A673 (cell line): ENCODE measurements at regions of chr4 and their contacts with region 1.

Region 1: DNA sequence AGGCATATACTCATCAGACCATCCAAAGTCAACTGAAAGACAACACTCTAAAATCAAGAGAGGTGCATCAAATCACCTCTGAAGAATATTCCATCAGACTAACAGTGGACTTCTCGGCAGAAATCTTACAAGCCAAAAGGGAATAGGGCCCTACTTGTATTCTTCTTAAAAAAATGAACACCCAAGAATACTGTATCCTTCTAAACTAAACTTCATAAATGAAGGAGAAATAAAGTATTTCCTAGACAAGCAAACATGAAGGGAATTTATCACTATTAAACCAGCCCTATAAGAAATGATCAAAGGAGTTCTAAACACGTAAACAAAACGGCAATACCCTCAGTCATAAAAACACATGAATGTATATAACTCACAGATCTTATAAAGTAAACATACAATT is 141.2 kb downstream of the CXXC4 start:
- DNase-seq: no peak
- H3K4me3 ChIP-seq: no peak overlapping the region
- H3K27ac ChIP-seq: no peak overlapping the region
- H3K4me1 ChIP-seq: no peaks in the 10 kb centered on the region
- H3K27me3 ChIP-seq: no peaks in the 10 kb centered on the region
- CTCF ChIP-seq: no peak

Region 2: DNA sequence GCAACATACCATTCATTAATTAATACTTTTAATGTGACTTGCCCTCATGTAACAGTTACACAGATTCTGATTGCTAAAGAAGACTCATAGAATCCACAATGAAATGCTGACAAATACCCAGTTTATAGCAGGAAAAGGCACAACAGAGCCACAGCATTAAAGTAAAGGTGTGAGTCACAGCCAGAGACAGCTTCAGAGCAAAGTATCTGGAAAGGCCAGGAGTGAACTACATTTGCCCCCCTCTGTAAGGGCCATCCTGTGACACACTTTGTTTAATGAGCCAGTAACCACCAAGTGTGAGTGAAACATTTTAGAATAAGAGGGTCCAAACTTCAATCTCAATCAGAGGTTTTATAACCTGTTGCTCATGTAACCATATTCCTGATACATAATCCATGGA is 499.9 kb before region 1 on chr4:
- CTCF ChIA-PET with region 1: no interaction called
- POLR2A ChIA-PET with region 1: no interaction called
- intact Hi-C with region 1: no loop called
- DNase-seq: no peak
- H3K4me3 ChIP-seq: no peak overlapping the region
- H3K27ac ChIP-seq: no peak overlapping the region
- H3K4me1 ChIP-seq: no peaks in the 10 kb centered on the region
- H3K27me3 ChIP-seq: no peaks in the 10 kb centered on the region
- CTCF ChIP-seq: no peak

Region 3: GRCh38 chr4:104334410-104334809 is 19.1 kb before region 1 on chr4:
- CTCF ChIA-PET with region 1: no interaction called
- POLR2A ChIA-PET with region 1: no interaction called
- intact Hi-C with region 1: no loop called
- DNase-seq: no peak
- H3K4me3 ChIP-seq: no peak overlapping the region
- H3K27ac ChIP-seq: no peak overlapping the region
- H3K4me1 ChIP-seq: no peaks in the 10 kb centered on the region
- H3K27me3 ChIP-seq: no peaks in the 10 kb centered on the region
- CTCF ChIP-seq: no peak

Region 4: DNA sequence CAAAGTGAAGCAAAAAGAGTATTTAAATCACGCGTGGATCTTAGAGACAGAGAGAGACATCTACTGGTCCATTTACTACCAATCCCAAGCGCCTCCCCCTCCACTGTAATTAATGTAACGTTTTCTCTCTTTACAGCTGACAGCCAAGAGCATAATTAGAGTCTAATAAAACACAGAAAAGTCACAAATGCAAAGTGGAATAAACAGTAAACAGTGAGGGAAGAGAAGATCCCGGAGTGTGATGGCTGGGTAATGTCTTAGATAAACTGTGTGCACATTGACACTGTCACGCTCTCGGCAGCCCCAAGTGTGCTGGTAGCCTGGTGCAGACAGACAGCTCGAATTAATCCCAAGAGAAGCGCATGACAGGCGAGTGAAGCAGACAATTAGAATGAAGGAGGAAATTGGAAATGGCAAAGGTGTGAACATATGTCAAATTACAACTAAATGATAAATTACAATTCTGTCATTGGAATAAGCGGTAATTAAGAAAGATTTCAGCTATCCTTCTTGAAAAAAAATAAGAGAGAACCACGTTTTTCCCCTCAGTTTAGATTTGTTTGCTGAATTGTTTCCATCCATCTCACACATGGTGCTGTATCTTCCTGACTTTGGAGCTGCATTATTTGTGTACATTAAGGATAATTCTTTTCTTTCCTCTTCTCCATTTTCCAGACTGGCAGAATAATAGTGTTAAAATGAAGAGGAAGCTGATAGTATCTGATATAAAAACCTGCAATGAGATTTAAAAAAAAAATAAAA is 41.1 kb after region 1 on chr4:
- CTCF ChIA-PET with region 1: no interaction called
- POLR2A ChIA-PET with region 1: no interaction called
- intact Hi-C with region 1: loop called (anchors 2 kb)
- DNase-seq: peak; percentile 38
- H3K4me3 ChIP-seq: peak overlapping the region; percentile 23
- H3K27ac ChIP-seq: no peak overlapping the region
- H3K4me1 ChIP-seq: peaks cover 25% of the 10 kb centered on the region
- H3K27me3 ChIP-seq: no peaks in the 10 kb centered on the region
- CTCF ChIP-seq: no peak; the same call in 1 of the 2 replicates